ENCODE measurements at regions of chr19 and their contacts with region 1.

Region 1: DNA sequence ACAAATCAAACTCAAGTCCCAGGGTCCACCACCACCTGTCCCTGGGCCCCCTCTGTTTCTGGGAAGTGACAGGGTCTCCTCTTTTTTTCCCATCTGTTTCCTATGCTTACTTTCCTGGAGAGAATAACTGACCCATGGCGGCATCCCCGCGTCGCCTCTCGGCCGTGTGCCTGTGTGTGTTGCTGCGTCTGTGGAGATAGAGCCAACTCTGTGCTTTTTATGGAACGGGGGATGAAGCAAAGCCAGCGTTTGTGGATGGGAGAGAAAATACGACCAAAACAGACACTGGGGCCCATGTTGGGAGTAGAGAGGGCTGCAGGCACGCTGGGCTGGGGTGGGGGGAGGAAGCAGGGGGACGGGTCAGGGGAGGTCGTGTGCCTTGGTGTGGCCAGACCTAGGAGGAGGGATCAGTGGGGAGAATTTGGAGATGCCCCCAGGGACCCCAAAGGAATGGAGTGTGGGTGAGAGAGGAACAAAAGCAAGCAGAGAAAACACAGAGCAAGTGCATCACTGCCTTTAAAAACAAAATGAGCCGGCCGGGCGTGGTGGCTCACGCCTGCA is 16.6 kb downstream of the PLK5 start:
- DNase-seq: no peak
- ATAC-seq: no peak
- H3K4me3 ChIP-seq: no peak overlapping the region
- H3K27ac ChIP-seq: no peak overlapping the region
- H3K4me1 ChIP-seq: no peaks in the 10 kb centered on the region
- H3K27me3 ChIP-seq: no peaks in the 10 kb centered on the region
- CTCF ChIP-seq: no peak
- EP300 ChIP-seq: no peak
- POLR2A ChIP-seq: no peak
- RAD21 ChIP-seq: no peak

Region 2: DNA sequence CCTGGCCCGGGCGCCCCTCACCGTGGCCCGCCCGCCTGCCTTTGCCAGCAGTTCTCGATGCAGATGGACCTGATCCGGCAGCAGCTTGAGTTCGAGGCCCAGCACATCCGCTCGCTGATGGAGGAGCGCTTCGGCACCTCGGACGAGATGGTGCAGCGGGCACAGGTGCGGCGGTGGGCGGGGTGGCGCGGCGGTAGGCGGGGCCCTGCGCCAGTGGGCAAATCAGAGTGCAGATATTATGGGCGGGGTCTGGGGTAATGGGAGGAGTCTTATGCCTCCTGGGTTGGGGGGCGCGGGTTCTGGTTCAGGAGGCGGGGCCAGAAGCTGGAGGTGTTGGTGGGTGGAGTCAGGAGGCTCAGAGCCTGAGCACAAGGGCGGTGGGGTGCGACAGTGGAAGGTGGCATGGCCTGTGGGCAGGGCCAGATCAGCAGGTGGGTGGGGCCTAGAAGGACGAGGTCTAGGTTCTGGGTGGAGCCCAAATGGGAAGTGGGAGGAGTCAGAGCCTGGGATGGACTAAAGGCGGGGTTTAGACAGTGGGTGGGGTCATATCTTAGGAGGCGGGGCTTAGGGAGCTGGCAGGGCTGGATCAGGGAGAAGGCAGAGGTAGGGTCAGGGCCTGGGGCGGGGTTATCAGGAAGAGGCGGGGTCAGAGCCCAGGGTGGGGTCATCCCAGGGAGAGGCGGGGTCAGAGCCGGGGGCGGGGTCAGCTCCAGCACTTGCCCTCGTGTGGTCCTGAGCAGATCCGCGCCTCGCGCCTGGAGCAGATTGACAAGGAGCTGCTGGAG is 84.9 kb before region 1 on chr19:
- CTCF ChIA-PET with region 1: no interaction called
- POLR2A ChIA-PET with region 1: no interaction called
- RAD21 ChIA-PET with region 1: no interaction called
- SMC1A ChIA-PET with region 1: no interaction called
- in situ Hi-C with region 1: no loop called
- intact Hi-C with region 1: no loop called
- DNase-seq: no peak
- ATAC-seq: peak; percentile 78
- H3K4me3 ChIP-seq: no peak overlapping the region
- H3K27ac ChIP-seq: no peak overlapping the region
- H3K4me1 ChIP-seq: peaks cover 3% of the 10 kb centered on the region
- H3K27me3 ChIP-seq: peaks cover 4% of the 10 kb centered on the region in 2 experiments; a peak in 2 of 4 replicates
- CTCF ChIP-seq: no peak
- EP300 ChIP-seq: no peak
- POLR2A ChIP-seq: 0 out of 2 replicates have a peak, but pooled peaks have one; percentile 19
- RAD21 ChIP-seq: no peak

Region 3: DNA sequence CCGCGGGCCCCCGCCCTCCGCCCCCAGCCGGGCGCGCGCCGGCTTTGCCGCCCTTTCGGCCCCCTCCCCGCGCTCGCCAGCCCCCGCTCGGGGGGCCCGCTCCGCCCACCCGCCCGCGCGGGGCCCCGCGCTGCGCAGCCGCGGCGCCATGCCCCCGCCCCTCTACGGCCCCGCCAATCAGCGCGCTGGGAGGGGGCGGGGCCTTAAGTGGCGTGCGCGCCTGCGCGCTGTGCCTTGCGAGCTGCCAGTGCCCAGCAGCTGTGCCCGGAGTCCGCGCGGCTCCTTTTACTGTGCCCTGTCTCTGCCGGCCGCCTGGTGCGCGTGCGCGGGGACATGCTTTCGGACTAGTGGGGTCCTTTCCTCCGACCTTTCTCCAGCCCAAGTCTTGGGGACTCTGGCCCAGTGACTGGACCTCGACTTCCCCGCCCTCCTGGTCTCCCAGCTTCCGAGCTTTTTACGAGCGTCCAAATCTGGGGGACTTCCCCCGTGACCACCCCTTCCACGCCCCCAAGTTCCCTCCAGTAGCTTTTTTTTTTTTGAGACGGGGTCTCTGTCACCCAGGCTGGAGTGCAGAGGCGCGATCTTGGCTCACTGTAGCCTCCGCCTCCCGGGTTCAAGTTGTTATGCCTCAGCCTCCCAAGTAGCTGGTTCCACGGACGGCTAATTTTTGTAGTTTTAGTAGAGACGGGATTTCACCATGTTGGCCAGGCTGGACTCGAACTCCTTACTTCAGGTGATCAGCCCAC is 52.5 kb after region 1 on chr19 and contains the start of gene MBD3:
- CTCF ChIA-PET with region 1: interaction called, 13 read pairs
- POLR2A ChIA-PET with region 1: no interaction called
- RAD21 ChIA-PET with region 1: no interaction called
- SMC1A ChIA-PET with region 1: no interaction called
- in situ Hi-C with region 1: no loop called
- intact Hi-C with region 1: no loop called
- DNase-seq: peak; percentile 44
- ATAC-seq: peak; percentile 81
- H3K4me3 ChIP-seq: peak within 1 kb of the TSS; percentile 98
- H3K27ac ChIP-seq: peak within 1 kb of the TSS; percentile 92
- H3K4me1 ChIP-seq: peaks cover 4% of the 10 kb centered on the region; the same call in 1 of the 2 replicates
- H3K27me3 ChIP-seq: no peaks in the 10 kb centered on the region
- CTCF ChIP-seq: no peak
- EP300 ChIP-seq: no peak
- POLR2A ChIP-seq: peak; percentile 72
- RAD21 ChIP-seq: no peak
- polyA plus RNA-seq, gene MBD3: 0.13 to 1.7 TPM

Region 4: DNA sequence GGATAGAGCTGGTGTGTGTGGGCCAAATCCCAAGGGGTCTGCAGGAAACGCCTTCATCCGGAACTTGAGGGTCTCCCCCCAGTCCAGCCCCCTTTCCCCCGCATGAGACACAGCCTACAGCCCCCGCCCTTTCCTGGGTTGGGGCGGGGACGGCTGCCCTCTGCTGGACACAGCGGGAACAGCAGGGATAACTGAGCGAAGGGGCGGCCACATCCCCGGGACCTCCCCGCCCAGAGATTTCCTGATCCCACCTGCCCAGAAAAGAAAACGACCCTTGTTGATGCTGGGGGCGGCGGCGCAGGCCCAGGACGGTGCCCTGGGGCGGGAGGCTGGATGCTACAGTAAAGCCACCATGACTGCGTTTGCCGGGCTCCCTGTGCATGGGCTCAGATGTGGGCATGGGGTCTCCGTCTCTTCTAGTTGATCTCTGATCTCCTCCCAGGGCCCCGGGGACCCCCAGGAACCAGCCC is 227.1 kb after region 1 on chr19:
- CTCF ChIA-PET with region 1: interaction called, 57 read pairs
- POLR2A ChIA-PET with region 1: no interaction called
- RAD21 ChIA-PET with region 1: no interaction called
- SMC1A ChIA-PET with region 1: no interaction called
- in situ Hi-C with region 1: loop called (anchors 10 kb)
- intact Hi-C with region 1: loop called (anchors 5 kb)
- DNase-seq: no peak
- ATAC-seq: peak; percentile 88
- H3K4me3 ChIP-seq: no peak overlapping the region
- H3K27ac ChIP-seq: no peak overlapping the region
- H3K4me1 ChIP-seq: no peaks in the 10 kb centered on the region
- H3K27me3 ChIP-seq: peaks cover 6 to 10% of the 10 kb centered on the region in 2 experiments; a peak in 3 of 4 replicates
- CTCF ChIP-seq: peak; percentile 87 to 98 (median 91)
- EP300 ChIP-seq: no peak
- POLR2A ChIP-seq: no peak
- RAD21 ChIP-seq: peak; percentile 85

Region 5: DNA sequence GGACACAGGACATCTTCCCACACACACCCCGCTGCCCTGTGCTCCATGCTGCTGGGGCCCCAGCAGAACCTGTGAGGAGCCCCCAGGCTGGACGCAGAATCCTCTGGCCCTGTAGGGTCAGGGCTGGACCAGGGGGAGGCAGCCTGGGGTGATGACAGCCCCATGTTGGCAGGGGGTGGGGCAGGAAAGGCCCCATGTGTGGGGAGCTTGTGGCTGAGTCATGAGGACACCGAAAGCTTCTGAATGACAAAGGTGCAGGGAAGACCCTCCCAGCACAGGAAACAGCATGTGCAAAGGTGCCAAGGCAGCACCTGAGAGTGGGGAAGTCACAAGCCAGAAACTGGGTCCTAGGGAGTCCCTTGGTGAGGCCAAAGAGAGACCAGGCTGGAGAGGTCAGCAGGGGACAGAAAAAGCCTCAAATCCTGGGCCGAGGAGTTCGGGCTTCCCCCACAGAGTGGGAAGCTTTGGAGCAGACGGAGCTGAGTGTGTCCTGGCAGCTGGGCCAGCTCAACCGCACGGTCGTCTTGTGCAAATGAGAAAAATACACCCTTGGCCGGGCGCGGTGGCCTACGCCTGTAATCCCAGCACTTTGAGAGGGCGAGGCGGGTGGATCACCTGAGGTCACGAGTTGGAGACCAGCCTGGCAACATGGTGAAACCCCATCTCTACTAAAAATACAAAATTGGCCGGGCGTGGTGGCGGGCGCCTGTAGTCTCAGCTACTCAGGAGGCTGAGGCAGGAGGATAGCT is 254.2 kb after region 1 on chr19:
- CTCF ChIA-PET with region 1: interaction called, 16 read pairs
- POLR2A ChIA-PET with region 1: no interaction called
- RAD21 ChIA-PET with region 1: no interaction called
- SMC1A ChIA-PET with region 1: interaction called, 3 read pairs
- in situ Hi-C with region 1: no loop called
- intact Hi-C with region 1: no loop called
- DNase-seq: no peak
- ATAC-seq: peak; percentile 29
- H3K4me3 ChIP-seq: no peak overlapping the region
- H3K27ac ChIP-seq: no peak overlapping the region
- H3K4me1 ChIP-seq: no peaks in the 10 kb centered on the region
- H3K27me3 ChIP-seq: no peaks in the 10 kb centered on the region
- CTCF ChIP-seq: no peak
- EP300 ChIP-seq: no peak
- POLR2A ChIP-seq: no peak
- RAD21 ChIP-seq: no peak